K562 (cell line): ENCODE measurements at regions of chrX and their contacts with region 1.

Region 1: GRCh38 chrX:118495061-118495921 is at the start of gene DOCK11:
- DNase-seq: peak; percentile 83 to 94 (median 85)
- ATAC-seq: peak; percentile 90
- H3K4me3 ChIP-seq: peak within 1 kb of the TSS; percentile 80
- H3K27ac ChIP-seq: peak within 1 kb of the TSS; percentile 79
- H3K4me1 ChIP-seq: peaks cover 23 to 34% of the 10 kb centered on the region in 2 experiments
- H3K27me3 ChIP-seq: no peaks in the 10 kb centered on the region
- CTCF ChIP-seq: no peak
- EP300 ChIP-seq: peak; percentile 43; the same call in 1 of the 2 replicates
- POLR2A ChIP-seq: peak; percentile 57
- RAD21 ChIP-seq: 0 out of 4 replicates have a peak, but pooled peaks have one; percentile 6 to 23
- polyA plus RNA-seq, gene DOCK11: 42.2 to 46.4 TPM

Region 2: GRCh38 chrX:118523920-118524319 is 28.6 kb after region 1 on chrX:
- CTCF ChIA-PET with region 1: no interaction called
- POLR2A ChIA-PET with region 1: interaction called, 4 read pairs
- in situ Hi-C with region 1: no loop called
- intact Hi-C with region 1: loop called (anchors 2 kb)
- DNase-seq: peak in 1 of 4 experiments; percentile 51
- ATAC-seq: peak; percentile 57
- H3K4me3 ChIP-seq: no peak overlapping the region
- H3K27ac ChIP-seq: peak overlapping the region; percentile 57
- H3K4me1 ChIP-seq: peaks cover 11 to 74% of the 10 kb centered on the region in 2 experiments
- H3K27me3 ChIP-seq: no peaks in the 10 kb centered on the region
- CTCF ChIP-seq: no peak
- EP300 ChIP-seq: no peak
- POLR2A ChIP-seq: no peak
- RAD21 ChIP-seq: no peak

Region 3: DNA sequence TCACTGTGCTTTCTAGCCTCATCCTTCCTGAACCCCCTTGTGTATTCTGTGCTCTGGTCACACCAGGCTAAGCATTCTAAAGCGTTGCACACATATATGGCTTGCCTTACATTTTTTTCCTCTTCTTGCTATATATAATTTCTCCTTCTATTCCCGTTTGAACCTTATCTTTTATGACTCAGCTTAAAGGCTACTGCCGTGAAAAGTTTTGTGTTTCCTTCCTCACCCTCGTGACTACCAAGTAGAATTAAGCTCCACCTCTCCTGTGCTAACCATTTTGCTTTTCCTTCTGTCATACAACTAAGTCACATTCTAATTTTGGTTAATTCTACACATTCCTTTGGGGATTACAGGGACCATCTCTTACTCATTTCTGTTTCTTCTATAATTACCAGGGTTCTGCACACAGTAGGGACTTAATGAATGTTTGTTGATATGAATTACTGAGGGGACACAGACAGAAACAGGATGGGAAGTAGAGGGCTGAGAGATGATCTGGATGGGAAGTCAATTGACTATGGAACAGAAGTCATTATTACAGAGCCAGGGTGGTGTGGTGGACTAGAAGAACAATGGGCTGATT is 67.4 kb after region 1 on chrX:
- CTCF ChIA-PET with region 1: no interaction called
- POLR2A ChIA-PET with region 1: no interaction called
- in situ Hi-C with region 1: no loop called
- intact Hi-C with region 1: loop called (anchors 5 kb)
- DNase-seq: peak in 3 of 4 experiments; percentile 11 to 67 (median 20)
- ATAC-seq: peak; percentile 73
- H3K4me3 ChIP-seq: no peak overlapping the region
- H3K27ac ChIP-seq: peak overlapping the region; percentile 79
- H3K4me1 ChIP-seq: peaks cover 6 to 48% of the 10 kb centered on the region in 2 experiments
- H3K27me3 ChIP-seq: no peaks in the 10 kb centered on the region
- CTCF ChIP-seq: no peak
- EP300 ChIP-seq: peak; percentile 40; the same call in 1 of the 2 replicates
- POLR2A ChIP-seq: no peak
- RAD21 ChIP-seq: no peak